Naive thymus-derived CD4-positive, alpha-beta T cell (primary cell): ENCODE measurements at regions of chr7 and their contacts with region 1.

Region 1: GRCh38 chr7:158976849-158977593 is 120.7 kb downstream of the DYNC2I1 start:
- DNase-seq: peak; percentile 77 to 94 (median 85)
- ATAC-seq: peak; percentile 93
- H3K4me3 ChIP-seq: peak overlapping the region; percentile 55
- H3K4me3 Mint-ChIP-seq: peak overlapping the region; percentile 74 to 94 (median 88)
- H3K27ac ChIP-seq: peak overlapping the region; percentile 57
- H3K27ac Mint-ChIP-seq: peak overlapping the region; percentile 72 to 93 (median 83)
- H3K4me1 ChIP-seq: peaks cover 9 to 11% of the 10 kb centered on the region in 2 donors
- H3K4me1 Mint-ChIP-seq: peaks cover 11 to 23% (median 20%) of the 10 kb centered on the region in 7 donors
- H3K27me3 ChIP-seq: no peaks in the 10 kb centered on the region
- H3K27me3 Mint-ChIP-seq: no peaks in the 10 kb centered on the region

Region 2: DNA sequence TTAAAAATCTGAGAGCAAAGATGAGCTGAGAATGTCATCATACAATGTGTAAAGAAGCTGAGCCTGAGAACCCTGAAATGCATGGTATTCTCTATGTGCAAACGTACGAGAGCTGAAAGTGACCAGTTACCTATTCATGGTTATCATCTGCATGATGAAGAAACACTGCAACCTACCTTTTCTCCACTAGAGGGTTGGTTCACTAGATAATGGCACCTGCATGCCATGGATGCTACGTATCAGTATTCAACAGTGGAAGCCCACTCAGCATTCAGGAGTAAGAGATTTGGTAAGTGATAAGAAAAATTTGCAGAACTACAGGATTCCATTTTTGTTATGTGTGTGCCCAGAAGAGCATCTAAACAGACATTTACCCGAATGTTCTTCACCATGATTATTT is 534.8 kb before region 1 on chr7:
- CTCF ChIA-PET with region 1: no interaction called
- POLR2A ChIA-PET with region 1: no interaction called
- intact Hi-C with region 1: loop called in 1 of 2 experiments (anchors 5 kb)
- DNase-seq: no peak
- ATAC-seq: no peak
- H3K4me3 ChIP-seq: no peak overlapping the region
- H3K4me3 Mint-ChIP-seq: no peak overlapping the region
- H3K27ac ChIP-seq: no peak overlapping the region
- H3K27ac Mint-ChIP-seq: no peak overlapping the region
- H3K4me1 ChIP-seq: no peaks in the 10 kb centered on the region
- H3K4me1 Mint-ChIP-seq: peaks cover 0 to 2% (median 0%) of the 10 kb centered on the region in 7 donors
- H3K27me3 ChIP-seq: no peaks in the 10 kb centered on the region
- H3K27me3 Mint-ChIP-seq: peaks cover 0 to 17% (median 9%) of the 10 kb centered on the region in 5 donors

Region 3: GRCh38 chr7:158689488-158689887 is 287.5 kb before region 1 on chr7:
- CTCF ChIA-PET with region 1: interaction called, 97 read pairs
- POLR2A ChIA-PET with region 1: no interaction called
- intact Hi-C with region 1: no loop called
- DNase-seq: no peak
- ATAC-seq: no peak
- H3K4me3 ChIP-seq: no peak overlapping the region
- H3K4me3 Mint-ChIP-seq: no peak overlapping the region
- H3K27ac ChIP-seq: no peak overlapping the region
- H3K27ac Mint-ChIP-seq: no peak overlapping the region
- H3K4me1 ChIP-seq: no peaks in the 10 kb centered on the region
- H3K4me1 Mint-ChIP-seq: peaks cover 0 to 14% (median 0%) of the 10 kb centered on the region in 7 donors
- H3K27me3 ChIP-seq: no peaks in the 10 kb centered on the region
- H3K27me3 Mint-ChIP-seq: no peaks in the 10 kb centered on the region

Region 4: GRCh38 chr7:158704704-158705468 is 272.1 kb before region 1 on chr7 and contains the start of gene NCAPG2:
- CTCF ChIA-PET with region 1: interaction called, 9 read pairs
- POLR2A ChIA-PET with region 1: interaction called, 6 read pairs
- intact Hi-C with region 1: loop called in 1 of 2 experiments (anchors 2 kb)
- DNase-seq: peak; percentile 94 to 98 (median 97)
- ATAC-seq: peak; percentile 99
- H3K4me3 ChIP-seq: peak within 1 kb of the TSS; percentile 88
- H3K4me3 Mint-ChIP-seq: peak within 1 kb of the TSS; percentile 66 to 88 (median 85)
- H3K27ac ChIP-seq: peak within 1 kb of the TSS; percentile 82
- H3K27ac Mint-ChIP-seq: peak within 1 kb of the TSS; percentile 46 to 91 (median 81)
- H3K4me1 ChIP-seq: peaks cover 12 to 15% of the 10 kb centered on the region in 2 donors
- H3K4me1 Mint-ChIP-seq: peaks cover 11 to 45% (median 15%) of the 10 kb centered on the region in 7 donors
- H3K27me3 ChIP-seq: no peaks in the 10 kb centered on the region
- H3K27me3 Mint-ChIP-seq: no peaks in the 10 kb centered on the region
- total RNA-seq, gene NCAPG2: 6.0 to 88.7 (median 8.8) TPM

Region 5: GRCh38 chr7:158782761-158783401 is 194.1 kb before region 1 on chr7:
- CTCF ChIA-PET with region 1: interaction called, 4 read pairs
- POLR2A ChIA-PET with region 1: no interaction called
- intact Hi-C with region 1: loop called (anchors 2 to 5 kb)
- DNase-seq: no peak
- ATAC-seq: peak; percentile 49
- H3K4me3 ChIP-seq: no peak overlapping the region
- H3K4me3 Mint-ChIP-seq: no peak overlapping the region
- H3K27ac ChIP-seq: peak overlapping the region; percentile 34
- H3K27ac Mint-ChIP-seq: no peak overlapping the region
- H3K4me1 ChIP-seq: peaks cover 7 to 41% of the 10 kb centered on the region in 2 donors
- H3K4me1 Mint-ChIP-seq: peaks cover 4 to 14% (median 8%) of the 10 kb centered on the region in 7 donors
- H3K27me3 ChIP-seq: no peaks in the 10 kb centered on the region
- H3K27me3 Mint-ChIP-seq: no peaks in the 10 kb centered on the region

Region 6: GRCh38 chr7:158885624-158886023 is 91.4 kb before region 1 on chr7:
- CTCF ChIA-PET with region 1: interaction called, 7 read pairs
- POLR2A ChIA-PET with region 1: no interaction called
- intact Hi-C with region 1: loop called (anchors 1 kb)
- DNase-seq: peak in 3 of 9 donors; percentile 11 to 19 (median 18)
- ATAC-seq: no peak
- H3K4me3 ChIP-seq: no peak overlapping the region
- H3K4me3 Mint-ChIP-seq: no peak overlapping the region
- H3K27ac ChIP-seq: no peak overlapping the region
- H3K27ac Mint-ChIP-seq: no peak overlapping the region
- H3K4me1 ChIP-seq: no peaks in the 10 kb centered on the region
- H3K4me1 Mint-ChIP-seq: peaks cover 0 to 5% (median 0%) of the 10 kb centered on the region in 7 donors
- H3K27me3 ChIP-seq: no peaks in the 10 kb centered on the region
- H3K27me3 Mint-ChIP-seq: no peaks in the 10 kb centered on the region

Region 7: GRCh38 chr7:159036916-159037605 is 60.0 kb after region 1 on chr7:
- CTCF ChIA-PET with region 1: no interaction called
- POLR2A ChIA-PET with region 1: no interaction called
- intact Hi-C with region 1: no loop called
- DNase-seq: no peak
- ATAC-seq: no peak
- H3K4me3 ChIP-seq: no peak overlapping the region
- H3K4me3 Mint-ChIP-seq: no peak overlapping the region
- H3K27ac ChIP-seq: no peak overlapping the region
- H3K27ac Mint-ChIP-seq: no peak overlapping the region
- H3K4me1 ChIP-seq: no peaks in the 10 kb centered on the region
- H3K4me1 Mint-ChIP-seq: peaks cover 0 to 5% (median 0%) of the 10 kb centered on the region in 7 donors
- H3K27me3 ChIP-seq: no peaks in the 10 kb centered on the region
- H3K27me3 Mint-ChIP-seq: peaks cover 0 to 17% (median 4%) of the 10 kb centered on the region in 5 donors

Region 8: DNA sequence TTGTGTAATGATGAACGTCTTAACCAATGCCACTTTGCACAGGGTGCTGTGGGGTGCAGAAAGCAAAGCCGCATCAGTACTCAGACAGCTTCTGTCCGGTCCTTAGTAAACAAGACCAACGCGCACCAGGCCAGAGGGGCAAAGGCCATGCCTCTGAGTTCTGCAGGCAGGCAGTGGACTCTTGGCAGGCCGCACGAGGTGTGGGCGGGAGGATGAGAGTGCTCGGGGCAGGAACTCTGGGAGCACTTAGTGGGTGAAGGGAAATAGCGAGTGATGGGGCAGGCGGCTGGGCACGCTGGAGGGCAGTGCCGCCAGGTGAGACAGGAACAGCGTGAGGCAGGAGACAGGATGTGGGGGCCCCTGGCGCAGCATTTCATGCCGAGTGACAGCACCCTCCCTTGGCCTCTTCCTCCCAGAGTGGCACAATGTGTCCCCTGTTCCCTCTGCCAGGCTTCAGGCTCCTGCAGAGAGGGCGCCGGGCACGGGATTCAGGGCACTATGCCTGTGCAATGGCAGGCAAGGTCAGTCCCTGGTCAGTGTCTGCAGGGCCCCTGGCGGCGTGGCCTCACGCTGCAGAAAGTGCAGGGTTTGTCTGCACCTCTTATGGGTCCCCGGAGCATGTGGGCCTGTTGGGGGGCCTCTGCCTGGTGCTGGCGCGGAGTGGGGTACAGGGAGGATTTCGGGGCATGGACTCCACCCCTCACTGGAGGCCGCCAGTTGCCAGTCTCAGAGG is 107.2 kb after region 1 on chr7:
- CTCF ChIA-PET with region 1: no interaction called
- POLR2A ChIA-PET with region 1: no interaction called
- intact Hi-C with region 1: no loop called
- DNase-seq: peak in 1 of 9 donors; percentile 2
- ATAC-seq: peak; percentile 18
- H3K4me3 ChIP-seq: no peak overlapping the region
- H3K4me3 Mint-ChIP-seq: no peak overlapping the region
- H3K27ac ChIP-seq: no peak overlapping the region
- H3K27ac Mint-ChIP-seq: no peak overlapping the region
- H3K4me1 ChIP-seq: no peaks in the 10 kb centered on the region
- H3K4me1 Mint-ChIP-seq: peaks cover 0 to 7% (median 3%) of the 10 kb centered on the region in 7 donors
- H3K27me3 ChIP-seq: no peaks in the 10 kb centered on the region
- H3K27me3 Mint-ChIP-seq: peaks cover 0 to 7% (median 4%) of the 10 kb centered on the region in 5 donors

Region 9: GRCh38 chr7:159227433-159227832 is 250.4 kb after region 1 on chr7:
- CTCF ChIA-PET with region 1: no interaction called
- POLR2A ChIA-PET with region 1: no interaction called
- intact Hi-C with region 1: no loop called
- DNase-seq: no peak
- ATAC-seq: no peak
- H3K4me3 ChIP-seq: no peak overlapping the region
- H3K4me3 Mint-ChIP-seq: no peak overlapping the region
- H3K27ac ChIP-seq: no peak overlapping the region
- H3K27ac Mint-ChIP-seq: no peak overlapping the region
- H3K4me1 ChIP-seq: no peaks in the 10 kb centered on the region
- H3K4me1 Mint-ChIP-seq: peaks cover 0 to 2% (median 0%) of the 10 kb centered on the region in 7 donors
- H3K27me3 ChIP-seq: no peaks in the 10 kb centered on the region
- H3K27me3 Mint-ChIP-seq: peaks cover 0 to 11% (median 0%) of the 10 kb centered on the region in 5 donors